ENCODE measurements at regions of chr17 and their contacts with region 1.

Region 1: DNA sequence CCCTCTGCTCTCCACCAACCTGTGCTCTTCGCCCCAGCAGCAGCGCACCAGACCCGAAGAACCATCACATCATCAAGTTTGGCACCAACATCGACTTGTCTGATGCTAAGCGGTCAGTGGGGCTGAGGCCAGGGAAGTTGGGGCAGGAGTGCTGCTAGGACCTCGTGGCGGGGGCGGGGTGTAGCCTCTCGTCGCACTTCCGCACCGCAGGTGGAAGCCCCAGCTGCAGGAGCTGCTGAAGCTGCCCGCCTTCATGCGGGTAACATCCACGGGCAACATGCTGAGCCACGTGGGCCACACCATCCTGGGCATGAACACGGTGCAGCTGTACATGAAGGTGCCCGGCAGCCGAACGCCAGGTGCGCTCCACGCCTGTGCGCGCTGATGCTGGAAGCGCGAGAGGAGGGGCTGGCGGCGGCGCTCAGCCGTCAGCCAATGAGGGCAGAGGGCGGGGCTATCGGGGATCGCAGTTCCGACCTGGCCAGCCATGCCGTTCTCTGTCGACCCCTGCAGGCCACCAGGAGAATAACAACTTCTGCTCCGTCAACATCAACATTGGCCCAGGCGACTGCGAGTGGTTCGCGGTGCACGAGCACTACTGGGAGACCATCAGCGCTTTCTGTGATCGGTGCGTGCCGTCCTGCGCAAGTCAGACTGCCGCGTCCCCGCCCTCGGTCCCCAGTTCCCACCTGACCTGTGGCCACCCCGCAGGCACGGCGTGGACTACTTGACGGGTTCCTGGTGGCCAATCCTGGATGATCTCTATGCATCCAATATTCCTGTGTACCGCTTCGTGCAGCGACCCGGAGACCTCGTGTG is 3.2 kb upstream of the TMEM88 start:
- DNase-seq: peak; percentile 91 to 95
- ATAC-seq: peak; percentile 78

Region 2: DNA sequence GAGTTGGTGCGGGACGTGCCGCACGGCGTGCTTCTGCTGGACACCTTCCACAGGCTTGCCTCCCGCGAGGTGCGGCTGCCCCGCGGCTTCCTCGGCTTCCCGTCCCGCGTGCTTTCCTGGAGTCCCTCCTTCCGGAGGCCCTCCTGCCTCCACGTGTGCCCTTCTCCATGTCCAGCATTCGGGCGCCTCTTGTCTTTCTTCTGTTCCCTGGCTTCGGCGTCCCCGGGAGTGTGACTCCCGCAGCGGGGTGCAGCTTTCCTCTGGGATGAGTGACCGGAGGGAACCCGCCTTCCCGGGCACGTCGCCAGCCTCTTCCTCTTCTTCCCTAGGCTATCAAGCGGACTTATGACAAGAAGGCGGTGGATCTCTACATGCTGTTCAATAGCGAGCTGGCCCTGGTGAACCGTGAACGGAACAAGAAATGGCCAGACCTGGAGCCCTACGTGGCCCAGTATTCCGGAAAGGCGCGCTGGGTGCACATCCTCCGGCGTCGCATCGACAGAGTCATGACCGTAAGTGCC is 111.1 kb before region 1 on chr17:
- intact Hi-C with region 1: loop called in 1 of 2 experiments (anchors 5 kb)
- DNase-seq: no peak
- ATAC-seq: no peak